ENCODE measurements at regions of chr3 and their contacts with region 1.

Region 1: GRCh38 chr3:33915791-33916546 is 117.5 kb downstream of the PDCD6IP start:
- DNase-seq: peak; percentile 46 to 69
- ATAC-seq: peak; percentile 86 to 94
- H3K4me3 ChIP-seq: no peak overlapping the region
- H3K27ac ChIP-seq: no peak overlapping the region
- H3K4me1 ChIP-seq: peaks cover 17% of the 10 kb centered on the region
- CTCF ChIP-seq: peak; percentile 57
- EP300 ChIP-seq: no peak
- POLR2A ChIP-seq: no peak
- RAD21 ChIP-seq: peak; percentile 81 to 92

Region 2: DNA sequence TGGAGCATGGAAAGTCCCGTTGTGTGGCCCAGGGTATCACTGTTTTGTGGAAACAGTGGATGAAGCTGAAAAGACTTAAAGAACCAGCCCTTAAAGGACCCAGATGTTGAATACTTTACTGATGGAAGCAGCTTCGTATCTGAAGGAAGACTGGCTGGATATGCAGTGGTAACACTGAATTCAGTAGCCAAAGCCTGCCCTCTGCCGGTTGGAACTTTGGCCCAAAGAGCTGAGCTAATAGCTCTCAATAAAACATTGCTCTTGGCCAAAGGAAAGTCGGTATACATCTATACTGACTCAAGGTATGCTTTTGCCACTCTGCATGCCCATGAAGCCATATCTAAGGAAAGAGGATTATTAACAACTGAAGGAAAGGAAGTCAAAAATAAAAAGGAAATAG is 767.9 kb after region 1 on chr3:
- CTCF ChIA-PET with region 1: interaction called, 46 read pairs
- POLR2A ChIA-PET with region 1: no interaction called
- DNase-seq: peak; percentile 2 to 64
- ATAC-seq: peak; percentile 88 to 94
- H3K4me3 ChIP-seq: no peak overlapping the region
- H3K27ac ChIP-seq: no peak overlapping the region
- H3K4me1 ChIP-seq: no peaks in the 10 kb centered on the region
- CTCF ChIP-seq: peak; percentile 69
- EP300 ChIP-seq: no peak
- POLR2A ChIP-seq: no peak
- RAD21 ChIP-seq: peak; percentile 82 to 87

Measured in A549 (cell line).